Activated CD8-positive, alpha-beta memory T cell treated with anti-CD3 and anti-CD28 coated beads, Interleukin-2, amount 10 ng/mL, durations not matched to agents 7 days and 5 days (primary cell): ENCODE measurements at regions of chr16 and their contacts with region 1.

Region 1: GRCh38 chr16:29700253-29700987 is 21.4 kb downstream of the QPRT start:
- DNase-seq: peak; percentile 83
- ATAC-seq: peak; percentile 61
- H3K4me3 Mint-ChIP-seq: peak overlapping the region; percentile 36
- H3K27ac Mint-ChIP-seq: peak overlapping the region; percentile 76
- H3K4me1 Mint-ChIP-seq: peaks cover 31% of the 10 kb centered on the region
- H3K27me3 Mint-ChIP-seq: peaks cover 2% of the 10 kb centered on the region

Region 2: DNA sequence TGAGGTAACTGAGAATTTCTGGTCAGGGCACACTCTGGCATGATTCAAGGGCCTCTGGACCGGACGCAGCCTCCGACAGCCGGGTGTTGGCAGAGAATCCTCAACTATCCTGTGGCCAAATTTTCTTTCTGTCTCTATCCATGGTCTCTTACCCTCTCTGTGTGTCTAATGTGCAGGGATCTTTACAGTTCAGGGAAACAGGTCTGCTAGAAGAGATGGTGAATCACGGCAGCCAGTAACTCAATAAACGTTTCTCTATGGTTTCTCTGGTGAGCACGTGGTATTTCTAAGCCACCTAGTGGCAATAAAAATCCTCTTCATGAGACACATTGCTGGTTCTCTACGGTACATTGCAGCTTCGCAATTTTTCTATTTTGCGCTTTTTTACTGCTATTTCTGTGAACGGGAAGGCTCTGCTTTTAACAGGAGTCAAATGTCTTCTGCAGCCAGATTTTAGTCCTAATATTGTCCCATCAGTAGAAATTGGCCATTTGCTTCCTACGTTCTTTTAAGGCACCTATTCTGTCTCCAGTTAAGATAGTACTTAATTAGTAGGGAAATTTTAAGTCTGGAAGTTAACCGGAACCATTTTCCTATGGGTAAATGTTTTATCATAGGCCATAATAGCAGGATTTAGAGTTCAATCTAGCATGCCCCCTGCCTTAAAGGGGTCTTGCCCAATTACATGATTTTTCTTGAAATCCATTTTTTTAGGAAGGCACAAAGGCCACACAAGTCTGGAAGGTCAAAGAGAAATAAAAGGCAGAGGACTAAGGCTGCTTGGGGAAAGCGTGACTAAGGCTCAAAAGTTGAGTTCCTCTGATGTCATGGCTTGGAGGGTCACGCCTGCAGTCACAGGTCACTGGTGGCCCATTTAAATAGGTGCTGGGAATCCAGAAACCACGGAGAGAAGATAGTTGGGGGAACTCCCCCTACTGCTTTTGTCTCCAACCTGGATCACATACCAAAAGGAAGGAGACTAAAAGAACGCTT is 10.1 kb after region 1 on chr16:
- CTCF ChIA-PET with region 1: interaction called, 75 read pairs
- DNase-seq: peak; percentile 63
- ATAC-seq: peak; percentile 98
- H3K4me3 Mint-ChIP-seq: no peak overlapping the region
- H3K27ac Mint-ChIP-seq: no peak overlapping the region
- H3K4me1 Mint-ChIP-seq: peaks cover 10% of the 10 kb centered on the region
- H3K27me3 Mint-ChIP-seq: peaks cover 4% of the 10 kb centered on the region

Region 3: GRCh38 chr16:29729116-29729521 is 28.7 kb after region 1 on chr16:
- CTCF ChIA-PET with region 1: interaction called, 54 read pairs
- DNase-seq: no peak
- ATAC-seq: no peak
- H3K4me3 Mint-ChIP-seq: no peak overlapping the region
- H3K27ac Mint-ChIP-seq: no peak overlapping the region
- H3K4me1 Mint-ChIP-seq: peaks cover 34% of the 10 kb centered on the region
- H3K27me3 Mint-ChIP-seq: peaks cover 13% of the 10 kb centered on the region

Region 4: DNA sequence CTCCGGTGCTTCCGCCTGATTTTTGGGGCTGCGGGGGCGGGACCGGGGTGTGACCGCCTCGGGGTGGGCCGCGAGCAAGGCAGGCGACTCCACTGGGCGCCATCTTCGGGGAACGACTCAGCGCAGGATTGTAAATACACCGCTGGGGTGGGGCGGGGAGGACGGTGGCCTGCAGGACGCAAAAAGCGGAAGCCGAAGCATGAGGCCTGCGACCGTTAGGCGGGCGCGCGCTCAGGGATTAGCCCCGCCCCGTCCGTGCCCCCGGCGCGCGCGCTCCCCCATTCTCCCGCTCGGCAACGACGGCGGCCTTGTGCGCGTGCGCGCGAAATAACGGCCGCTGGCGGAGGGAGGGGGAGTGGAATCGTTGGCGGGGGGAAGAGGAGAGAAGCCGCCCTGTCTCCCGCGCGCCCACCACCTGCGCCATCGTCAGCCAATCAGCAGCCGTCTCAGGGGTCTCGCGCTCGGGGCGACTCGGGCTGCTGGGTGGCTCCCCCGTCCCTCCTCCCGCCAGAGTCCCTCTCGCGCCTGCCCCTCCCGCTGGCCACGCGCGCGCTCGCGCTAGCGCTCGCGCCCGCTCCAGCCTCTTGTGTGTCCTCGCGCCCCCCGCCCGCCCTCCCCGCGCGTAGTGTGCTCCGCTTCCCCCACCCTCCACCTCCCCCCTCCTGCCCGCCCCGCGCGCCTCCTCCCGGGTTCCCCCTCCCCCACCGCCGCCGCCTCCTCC is 105.1 kb after region 1 on chr16:
- CTCF ChIA-PET with region 1: interaction called, 37 read pairs
- DNase-seq: peak; percentile 99
- ATAC-seq: peak; percentile 70
- H3K4me3 Mint-ChIP-seq: peak overlapping the region; percentile 94
- H3K27ac Mint-ChIP-seq: peak overlapping the region; percentile 96
- H3K4me1 Mint-ChIP-seq: peaks cover 44% of the 10 kb centered on the region
- H3K27me3 Mint-ChIP-seq: no peaks in the 10 kb centered on the region

Region 5: DNA sequence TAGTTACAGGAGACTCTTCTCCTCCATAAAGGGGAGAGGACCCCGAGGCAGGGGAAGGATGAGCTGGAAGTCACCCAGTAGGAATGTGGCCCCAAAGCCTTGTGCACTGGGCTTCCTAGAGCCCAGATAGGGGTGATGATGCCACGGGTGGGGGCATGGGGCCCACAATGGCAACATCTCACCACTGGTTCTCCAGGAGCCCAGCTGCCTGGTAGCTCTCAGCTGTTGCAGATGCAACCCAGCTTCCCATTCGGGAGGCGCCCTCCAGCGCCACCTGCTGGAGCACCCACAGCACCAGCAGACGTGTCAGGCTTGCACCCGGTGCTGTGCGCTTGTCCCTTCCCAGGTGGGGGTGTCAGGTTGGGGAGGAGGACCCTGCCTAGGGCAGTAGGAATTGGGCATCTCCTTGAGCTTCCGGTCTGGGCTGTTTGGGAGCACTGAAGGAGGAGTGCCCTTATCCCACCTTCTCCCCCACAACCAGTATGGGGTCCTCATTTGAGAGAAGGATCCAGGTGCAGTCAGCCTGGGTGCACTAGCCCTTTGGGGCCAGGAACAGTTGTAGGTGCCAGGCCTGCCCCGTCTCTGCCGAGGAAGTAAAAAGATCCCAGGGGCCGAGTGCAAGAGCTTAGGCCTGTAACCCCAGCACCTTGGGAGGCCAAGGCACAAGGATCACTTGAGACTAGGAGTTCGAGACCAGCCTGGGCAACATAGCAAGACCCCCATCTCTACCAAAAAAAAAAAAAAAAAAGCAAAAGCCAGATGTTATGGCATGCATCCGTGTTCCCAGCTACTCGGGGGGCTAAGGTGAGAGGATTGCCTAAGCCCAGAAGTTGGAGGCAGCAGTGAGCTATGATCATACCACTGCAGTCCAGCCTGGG is 148.2 kb after region 1 on chr16:
- CTCF ChIA-PET with region 1: interaction called, 109 read pairs
- DNase-seq: peak; percentile 87
- ATAC-seq: peak; percentile 93
- H3K4me3 Mint-ChIP-seq: no peak overlapping the region
- H3K27ac Mint-ChIP-seq: no peak overlapping the region
- H3K4me1 Mint-ChIP-seq: no peaks in the 10 kb centered on the region
- H3K27me3 Mint-ChIP-seq: no peaks in the 10 kb centered on the region

Region 6: DNA sequence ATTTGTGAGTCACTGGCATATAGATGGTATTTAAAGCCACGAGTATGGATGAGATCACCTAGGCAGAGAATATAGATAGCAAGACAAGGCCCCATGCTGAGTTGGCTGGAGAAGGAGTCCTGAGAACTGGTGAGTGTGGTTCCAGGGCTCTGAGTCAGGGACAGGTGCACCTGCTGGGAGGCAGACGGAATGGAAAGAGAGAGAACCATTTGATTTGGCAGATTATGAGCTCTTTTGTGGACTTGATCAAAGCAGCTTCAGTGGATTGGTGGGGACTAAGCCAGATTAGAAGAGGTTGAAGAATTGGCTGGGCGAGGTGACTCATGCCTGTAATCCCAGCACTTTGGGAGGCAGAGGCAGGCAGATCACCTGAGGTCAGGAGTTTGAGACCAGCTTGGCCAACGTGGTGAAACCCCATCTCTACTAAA is 318.3 kb after region 1 on chr16:
- CTCF ChIA-PET with region 1: interaction called, 12 read pairs
- DNase-seq: no peak
- ATAC-seq: no peak
- H3K4me3 Mint-ChIP-seq: no peak overlapping the region
- H3K27ac Mint-ChIP-seq: no peak overlapping the region
- H3K4me1 Mint-ChIP-seq: peaks cover 7% of the 10 kb centered on the region
- H3K27me3 Mint-ChIP-seq: peaks cover 24% of the 10 kb centered on the region